ENCODE measurements at regions of chr16 and their contacts with region 1.

Region 1: GRCh38 chr16:49491771-49492761 is 118.5 kb downstream of the C16orf78 start:
- DNase-seq: peak; percentile 83

Region 2: DNA sequence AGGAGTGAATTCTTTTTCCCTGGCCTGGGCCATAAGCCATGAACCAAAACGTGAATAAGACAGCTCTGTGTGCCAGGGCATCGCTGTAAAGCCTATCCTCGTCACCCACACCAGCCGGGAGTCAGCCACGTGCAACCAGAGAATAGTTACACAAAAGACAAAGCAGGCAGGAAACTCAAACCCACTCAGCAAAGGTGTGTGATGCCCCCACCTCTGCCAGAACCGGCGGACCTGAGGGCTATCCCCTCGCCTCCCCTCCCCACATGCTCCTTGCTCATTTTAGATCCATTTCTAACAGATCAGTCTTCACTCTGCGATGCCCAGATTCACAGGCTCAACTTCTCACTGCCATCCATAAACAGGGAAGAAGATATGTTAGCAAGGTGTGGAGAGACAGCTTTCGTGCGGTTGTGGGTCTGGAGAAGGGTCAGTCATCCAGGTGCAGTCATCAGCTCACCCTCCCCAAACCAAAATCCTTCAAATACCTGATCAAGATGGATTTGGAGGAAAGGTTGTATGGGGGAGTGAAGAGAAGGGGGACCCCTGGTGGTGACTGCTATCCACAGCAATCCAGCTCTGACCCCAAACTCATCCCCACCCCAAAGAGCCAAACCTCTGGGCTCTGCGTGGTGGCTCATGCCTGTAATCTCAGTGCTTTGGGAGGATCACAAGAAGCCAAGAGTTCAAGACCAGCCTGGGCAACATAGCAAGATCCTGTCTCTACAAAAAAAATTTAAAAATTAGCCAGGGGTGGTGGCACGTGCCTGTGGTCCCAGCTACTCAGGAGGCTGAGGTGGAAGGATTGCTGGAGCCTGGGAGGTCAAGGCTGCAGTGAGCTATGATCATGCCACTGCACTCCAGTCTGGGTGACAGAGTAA is 100.7 kb after region 1 on chr16:
- intact Hi-C with region 1: loop called (anchors 10 kb)
- DNase-seq: peak; percentile 52

Region 3: DNA sequence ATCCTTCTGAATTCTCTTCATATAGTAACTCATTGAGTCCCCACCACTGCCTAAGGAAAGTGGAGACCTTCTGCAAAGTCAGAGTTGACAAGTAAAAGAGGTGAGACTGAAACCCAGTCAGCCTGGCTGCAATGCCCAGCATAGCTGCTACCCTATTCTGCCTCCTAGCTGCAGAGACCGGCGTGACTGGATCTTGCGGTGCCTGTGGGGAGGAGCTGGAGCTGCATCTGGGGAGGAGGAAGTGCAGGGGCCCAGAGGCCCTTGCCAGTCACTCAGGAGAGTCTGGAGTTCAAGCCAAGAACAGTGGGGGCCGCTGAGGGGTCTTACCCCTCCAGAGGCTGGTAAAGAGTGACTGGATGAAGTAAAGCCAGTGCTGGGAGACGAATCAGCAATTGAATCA is 398.8 kb after region 1 on chr16:
- intact Hi-C with region 1: no loop called
- DNase-seq: no peak

Measured in posterior vena cava (tissue), 2 donors.